CD8-positive, alpha-beta T cell (primary cell): ENCODE measurements at regions of chr9 and their contacts with region 1.

Region 1: DNA sequence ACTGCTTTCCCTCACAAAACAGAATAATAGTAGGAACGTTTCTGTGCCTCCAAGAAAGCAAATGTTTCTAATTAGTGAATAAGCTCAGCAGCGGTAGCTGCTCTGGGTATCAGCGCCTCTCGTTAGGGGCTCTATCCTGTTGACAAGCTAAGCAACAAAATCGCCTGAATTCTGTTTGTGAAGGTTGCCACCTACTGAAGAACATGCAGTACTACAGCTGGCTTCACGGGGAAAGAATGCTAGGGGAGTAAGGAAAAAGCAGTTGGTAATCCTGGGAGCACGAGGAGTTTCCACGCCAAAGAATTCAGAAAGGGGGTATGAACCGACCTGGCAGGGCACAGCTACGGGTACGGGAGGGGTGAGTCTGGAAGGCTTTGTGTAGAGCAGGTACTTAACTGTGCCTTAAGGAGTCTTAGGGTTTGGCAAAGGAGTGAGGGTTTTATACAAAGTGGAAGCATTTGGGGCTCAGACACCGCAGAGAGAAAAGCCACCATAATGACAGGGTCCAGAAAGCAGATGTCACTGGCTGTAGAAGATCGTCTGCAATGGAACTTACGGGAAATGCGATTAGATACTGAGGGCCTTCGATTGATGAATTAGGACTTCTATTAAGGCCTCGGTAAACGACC is 171.7 kb downstream of the TTC39B start:
- DNase-seq: peak in 8 of 9 experiments; percentile 7 to 64 (median 36)
- ATAC-seq: peak; percentile 91
- H3K4me3 ChIP-seq: no peak overlapping the region
- H3K4me3 Mint-ChIP-seq: no peak overlapping the region
- H3K27ac ChIP-seq: no peak overlapping the region
- H3K27ac Mint-ChIP-seq: no peak overlapping the region
- H3K4me1 ChIP-seq: peaks cover 5% of the 10 kb centered on the region
- H3K4me1 Mint-ChIP-seq: peaks cover 5% of the 10 kb centered on the region
- H3K27me3 ChIP-seq: no peaks in the 10 kb centered on the region
- H3K27me3 Mint-ChIP-seq: no peaks in the 10 kb centered on the region
- CTCF ChIP-seq: peak; percentile 81

Region 2: DNA sequence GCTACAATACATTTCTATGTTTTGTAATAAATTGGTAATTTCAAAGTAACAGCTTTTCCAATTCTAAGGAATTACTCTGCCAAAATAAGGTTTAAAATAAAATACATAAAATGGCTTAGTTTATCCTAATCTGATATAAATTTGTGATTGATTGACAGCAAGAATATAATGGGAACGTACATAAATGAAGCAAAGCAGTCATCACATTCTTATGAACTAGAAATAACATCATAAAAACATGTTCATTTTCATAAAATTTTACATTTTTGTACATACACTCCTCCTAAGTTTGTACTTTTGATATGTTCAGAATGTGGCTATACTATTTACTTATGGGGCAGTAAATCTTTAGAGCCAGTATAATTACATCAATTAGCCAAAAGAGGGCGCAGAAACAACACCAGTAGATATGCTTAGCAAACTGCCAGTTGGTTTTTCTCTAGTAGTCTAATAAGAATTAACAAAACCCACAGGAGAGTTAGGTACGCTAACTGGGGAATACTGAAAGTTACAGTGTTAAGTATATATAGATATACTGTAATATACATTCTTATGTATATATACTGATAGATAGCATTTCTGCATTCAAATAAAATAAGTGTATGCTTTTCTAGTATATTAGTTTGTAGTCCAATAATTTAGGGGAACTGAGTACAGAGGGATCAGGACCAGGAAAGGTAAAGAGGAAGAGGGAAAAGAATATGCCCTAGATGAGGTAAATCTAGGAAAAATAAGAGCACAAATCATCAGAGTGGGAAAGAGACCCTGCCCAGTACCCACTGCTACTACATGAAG is 518.9 kb before region 1 on chr9:
- CTCF ChIA-PET with region 1: interaction called, 6 read pairs
- POLR2A ChIA-PET with region 1: no interaction called
- intact Hi-C with region 1: loop called in 1 of 2 experiments (anchors 1 kb)
- DNase-seq: peak in 2 of 9 experiments; percentile 47 to 57
- ATAC-seq: no peak
- H3K4me3 ChIP-seq: no peak overlapping the region
- H3K4me3 Mint-ChIP-seq: no peak overlapping the region
- H3K27ac ChIP-seq: no peak overlapping the region
- H3K27ac Mint-ChIP-seq: no peak overlapping the region
- H3K4me1 ChIP-seq: no peaks in the 10 kb centered on the region
- H3K4me1 Mint-ChIP-seq: no peaks in the 10 kb centered on the region
- H3K27me3 ChIP-seq: no peaks in the 10 kb centered on the region
- H3K27me3 Mint-ChIP-seq: no peaks in the 10 kb centered on the region
- CTCF ChIP-seq: peak; percentile 65

Region 3: DNA sequence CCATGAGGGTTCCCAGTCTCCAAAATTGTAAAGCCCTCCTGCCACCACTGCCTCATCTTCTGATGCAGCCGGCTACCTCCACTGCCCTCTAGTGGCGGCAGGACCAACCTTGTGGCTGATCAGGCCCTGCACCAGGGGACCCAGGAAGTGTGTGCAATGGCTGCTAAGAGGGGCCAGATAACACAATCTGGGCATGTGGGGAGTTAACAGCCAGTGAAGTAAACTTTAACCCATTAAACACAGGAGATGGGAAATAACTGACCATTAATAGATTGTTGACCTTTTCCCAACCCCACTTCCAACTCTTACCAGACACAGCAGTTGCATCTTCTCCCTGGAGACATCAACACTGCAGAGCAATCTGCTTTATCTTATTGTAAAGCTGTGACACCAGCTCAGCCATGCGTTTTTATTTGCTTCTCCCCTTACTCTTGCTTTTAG is 288.4 kb before region 1 on chr9:
- CTCF ChIA-PET with region 1: no interaction called
- POLR2A ChIA-PET with region 1: no interaction called
- intact Hi-C with region 1: loop called (anchors 5 to 10 kb)
- DNase-seq: peak; percentile 0 to 51 (median 16)
- ATAC-seq: no peak
- H3K4me3 ChIP-seq: no peak overlapping the region
- H3K4me3 Mint-ChIP-seq: no peak overlapping the region
- H3K27ac ChIP-seq: no peak overlapping the region
- H3K27ac Mint-ChIP-seq: no peak overlapping the region
- H3K4me1 ChIP-seq: no peaks in the 10 kb centered on the region
- H3K4me1 Mint-ChIP-seq: no peaks in the 10 kb centered on the region
- H3K27me3 ChIP-seq: no peaks in the 10 kb centered on the region
- H3K27me3 Mint-ChIP-seq: peaks cover 11% of the 10 kb centered on the region
- CTCF ChIP-seq: peak; percentile 41

Region 4: DNA sequence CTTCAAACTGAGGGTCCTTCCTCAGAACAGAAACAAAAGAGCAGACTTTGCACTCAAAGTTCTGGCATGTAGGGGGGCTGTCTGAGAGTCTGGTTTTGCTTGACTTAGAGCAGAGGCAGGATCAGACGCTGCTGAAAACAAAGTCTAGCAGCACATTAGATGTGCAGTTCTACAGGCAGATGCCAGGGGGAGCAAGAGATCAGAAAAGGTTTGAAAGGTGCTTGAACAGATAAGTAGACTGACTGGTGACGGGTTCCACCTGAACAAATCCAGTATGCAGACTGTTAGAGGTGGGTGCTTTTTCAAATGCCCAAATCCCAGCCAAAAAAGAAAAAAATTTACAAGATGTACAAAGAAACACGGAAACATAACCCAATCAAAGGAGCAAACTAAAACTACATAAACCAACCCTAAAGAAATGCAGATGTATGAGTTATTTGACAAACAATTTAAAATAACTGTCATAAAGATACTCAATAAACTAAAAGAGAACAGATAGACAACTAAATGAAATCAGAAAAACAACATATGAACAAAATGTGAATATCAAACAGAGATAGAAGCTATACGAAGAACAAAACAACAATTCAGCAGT is 30.4 kb before region 1 on chr9:
- CTCF ChIA-PET with region 1: interaction called, 47 read pairs
- POLR2A ChIA-PET with region 1: interaction called, 3 read pairs
- intact Hi-C with region 1: loop called (anchors 1 to 2 kb)
- DNase-seq: peak in 8 of 9 experiments; percentile 3 to 56 (median 36)
- ATAC-seq: peak; percentile 59
- H3K4me3 ChIP-seq: no peak overlapping the region
- H3K4me3 Mint-ChIP-seq: no peak overlapping the region
- H3K27ac ChIP-seq: no peak overlapping the region
- H3K27ac Mint-ChIP-seq: no peak overlapping the region
- H3K4me1 ChIP-seq: no peaks in the 10 kb centered on the region
- H3K4me1 Mint-ChIP-seq: no peaks in the 10 kb centered on the region
- H3K27me3 ChIP-seq: no peaks in the 10 kb centered on the region
- H3K27me3 Mint-ChIP-seq: peaks cover 9% of the 10 kb centered on the region
- CTCF ChIP-seq: peak; percentile 69